ENCODE measurements at regions of chr13 and their contacts with region 1.

Region 1: DNA sequence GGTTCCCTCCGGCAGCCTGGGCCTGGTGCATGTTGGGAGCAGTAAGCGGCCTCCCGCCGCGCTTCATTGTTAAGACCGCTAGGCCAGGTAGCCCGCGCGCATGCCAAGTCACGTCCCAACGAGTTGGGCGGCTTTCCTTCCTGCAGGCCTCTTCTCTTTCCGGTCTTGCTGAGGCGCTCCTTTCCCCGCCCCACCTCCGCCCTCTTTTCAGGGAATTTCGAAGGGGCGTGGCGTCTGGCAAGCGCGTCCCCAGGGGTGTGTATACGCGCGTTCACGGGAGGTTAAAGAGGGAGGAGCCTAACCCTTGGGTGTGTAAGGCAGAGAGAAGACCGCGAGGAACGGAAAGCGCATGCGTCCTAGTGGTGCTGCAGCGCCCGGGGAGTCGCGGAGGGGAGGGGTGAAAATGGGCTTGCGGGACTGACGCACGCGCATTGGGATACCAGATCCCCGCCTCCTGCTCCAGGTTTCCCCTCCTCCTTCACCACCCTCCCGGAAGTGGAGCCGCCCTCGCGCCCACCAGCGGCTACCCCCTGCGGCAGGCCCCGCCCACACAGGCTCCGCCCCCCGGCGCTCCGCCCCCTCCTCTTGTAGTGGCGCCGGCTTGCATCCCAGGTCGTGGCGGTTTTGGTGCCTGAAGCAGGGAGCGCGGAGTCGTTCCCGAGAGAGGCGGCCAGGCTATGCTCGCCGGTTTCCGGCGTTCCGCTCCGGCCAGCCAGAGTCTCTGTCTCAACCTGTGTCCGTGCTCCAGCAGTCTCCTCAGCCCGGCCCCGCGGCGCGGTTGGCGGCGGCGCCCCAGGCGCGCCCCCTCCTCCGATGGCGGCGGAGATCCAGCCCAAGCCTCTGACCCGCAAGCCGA is at the start of gene WDFY2:
- DNase-seq: peak; percentile 100
- ATAC-seq: peak; percentile 80
- H3K4me3 Mint-ChIP-seq: peak within 1 kb of the TSS; percentile 94
- H3K27ac Mint-ChIP-seq: peak within 1 kb of the TSS; percentile 97
- H3K4me1 Mint-ChIP-seq: peaks cover 31% of the 10 kb centered on the region
- H3K27me3 Mint-ChIP-seq: no peaks in the 10 kb centered on the region
- CTCF ChIP-seq: no peak
- total RNA-seq, gene WDFY2: 16.8 and 20.8 TPM in 2 replicates

Region 2: GRCh38 chr13:49792550-49793324 is 1791.4 kb before region 1 on chr13 and contains the start of gene KPNA3:
- CTCF ChIA-PET with region 1: no interaction called
- POLR2A ChIA-PET with region 1: no interaction called
- intact Hi-C with region 1: loop called (anchors 2 kb)
- DNase-seq: peak; percentile 88
- ATAC-seq: peak; percentile 89
- H3K4me3 Mint-ChIP-seq: peak within 1 kb of the TSS; percentile 97
- H3K27ac Mint-ChIP-seq: peak within 1 kb of the TSS; percentile 97
- H3K4me1 Mint-ChIP-seq: peaks cover 31% of the 10 kb centered on the region
- H3K27me3 Mint-ChIP-seq: no peaks in the 10 kb centered on the region
- CTCF ChIP-seq: no peak
- total RNA-seq, gene KPNA3: 28.6 and 28.7 TPM in 2 replicates

Region 3: DNA sequence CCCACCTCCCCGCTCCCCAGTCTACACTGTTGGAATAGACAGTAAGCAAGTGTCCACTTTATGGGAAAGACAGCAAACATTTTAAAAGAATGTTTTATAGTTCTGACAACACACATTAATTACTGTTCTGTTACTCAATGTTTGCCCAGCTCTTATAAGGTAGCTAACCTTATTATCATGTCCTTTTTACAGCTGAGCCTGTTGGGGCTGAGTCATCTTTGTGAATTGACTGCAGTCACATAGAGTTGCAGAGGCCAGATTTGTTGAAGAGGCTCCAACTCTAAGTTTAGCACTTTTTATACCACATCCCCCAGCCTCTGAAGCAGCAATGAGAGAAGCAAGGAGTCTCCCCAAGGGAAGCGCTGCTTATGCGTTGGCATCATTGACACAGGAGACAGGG is 549.2 kb before region 1 on chr13:
- CTCF ChIA-PET with region 1: no interaction called
- POLR2A ChIA-PET with region 1: no interaction called
- intact Hi-C with region 1: no loop called
- DNase-seq: no peak
- ATAC-seq: no peak
- H3K4me3 Mint-ChIP-seq: no peak overlapping the region
- H3K27ac Mint-ChIP-seq: no peak overlapping the region
- H3K4me1 Mint-ChIP-seq: no peaks in the 10 kb centered on the region
- H3K27me3 Mint-ChIP-seq: no peaks in the 10 kb centered on the region
- CTCF ChIP-seq: no peak

Region 4: GRCh38 chr13:51202477-51203046 is 381.5 kb before region 1 on chr13:
- CTCF ChIA-PET with region 1: no interaction called
- POLR2A ChIA-PET with region 1: no interaction called
- intact Hi-C with region 1: no loop called
- DNase-seq: no peak
- ATAC-seq: no peak
- H3K4me3 Mint-ChIP-seq: no peak overlapping the region
- H3K27ac Mint-ChIP-seq: no peak overlapping the region
- H3K4me1 Mint-ChIP-seq: no peaks in the 10 kb centered on the region
- H3K27me3 Mint-ChIP-seq: peaks cover 15% of the 10 kb centered on the region
- CTCF ChIP-seq: no peak

Region 5: GRCh38 chr13:51614350-51614786 is 30.3 kb after region 1 on chr13:
- CTCF ChIA-PET with region 1: interaction called, 5 read pairs
- POLR2A ChIA-PET with region 1: interaction called, 33 read pairs
- intact Hi-C with region 1: loop called (anchors 1 kb)
- DNase-seq: no peak
- ATAC-seq: peak; percentile 86
- H3K4me3 Mint-ChIP-seq: peak overlapping the region; percentile 90
- H3K27ac Mint-ChIP-seq: peak overlapping the region; percentile 97
- H3K4me1 Mint-ChIP-seq: peaks cover 58% of the 10 kb centered on the region
- H3K27me3 Mint-ChIP-seq: no peaks in the 10 kb centered on the region
- CTCF ChIP-seq: no peak

Region 6: GRCh38 chr13:51797664-51798488 is 213.8 kb after region 1 on chr13:
- CTCF ChIA-PET with region 1: interaction called, 5 read pairs
- POLR2A ChIA-PET with region 1: interaction called, 6 read pairs
- intact Hi-C with region 1: loop called (anchors 1 kb)
- DNase-seq: no peak
- ATAC-seq: peak; percentile 45
- H3K4me3 Mint-ChIP-seq: no peak overlapping the region
- H3K27ac Mint-ChIP-seq: no peak overlapping the region
- H3K4me1 Mint-ChIP-seq: peaks cover 47% of the 10 kb centered on the region
- H3K27me3 Mint-ChIP-seq: no peaks in the 10 kb centered on the region
- CTCF ChIP-seq: no peak

Region 7: DNA sequence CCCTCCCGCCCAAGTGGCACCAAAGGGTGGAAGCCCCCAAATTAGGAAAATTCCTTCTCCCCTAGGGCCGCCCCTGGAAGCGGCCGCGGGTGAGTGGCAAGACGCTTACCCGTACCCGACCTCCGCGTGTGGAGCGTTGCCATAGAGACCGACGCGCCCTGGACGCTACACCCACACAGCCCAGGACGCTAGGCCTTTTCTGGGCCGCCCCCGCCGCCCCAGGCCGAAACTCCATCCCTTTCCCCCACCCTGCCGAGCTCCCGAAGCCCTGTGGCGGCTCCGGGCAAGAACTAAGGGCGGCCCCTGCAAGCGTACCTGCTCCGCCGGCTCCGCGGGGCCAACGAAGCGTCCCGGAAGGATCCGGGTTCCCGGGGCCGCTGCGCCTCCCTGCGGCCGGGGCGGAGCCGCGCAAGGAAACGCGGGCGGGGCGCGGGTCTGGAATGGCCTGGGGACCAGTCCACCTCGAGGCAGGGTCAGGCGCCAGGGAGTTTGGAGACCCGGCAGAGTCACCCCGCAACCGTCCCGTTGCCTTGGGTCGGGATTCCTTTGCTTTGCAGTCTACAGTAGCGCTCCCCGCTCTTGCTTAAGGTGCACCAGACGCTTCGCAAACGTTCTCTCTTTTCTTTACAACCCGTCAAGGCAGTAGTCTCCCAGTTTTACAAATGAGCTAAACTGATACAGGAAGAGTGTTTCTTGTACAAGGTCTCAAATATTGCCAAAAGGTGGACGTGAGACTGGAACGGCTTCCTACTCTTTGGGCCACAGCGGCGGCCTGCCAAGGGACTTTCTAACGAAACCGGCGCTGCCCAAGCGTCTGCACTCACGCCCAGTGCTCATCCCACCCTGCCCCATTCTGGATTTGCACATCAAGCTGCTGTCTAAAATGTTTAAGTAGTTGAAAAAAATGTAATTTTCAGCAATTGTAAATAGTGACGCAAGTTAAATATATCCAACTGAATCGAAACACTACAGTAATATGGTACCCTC is 544.9 kb after region 1 on chr13 and contains the start of gene NEK5:
- CTCF ChIA-PET with region 1: no interaction called
- POLR2A ChIA-PET with region 1: no interaction called
- intact Hi-C with region 1: loop called (anchors 5 kb)
- DNase-seq: peak; percentile 56
- ATAC-seq: peak; percentile 68
- H3K4me3 Mint-ChIP-seq: peak within 1 kb of the TSS; percentile 87
- H3K27ac Mint-ChIP-seq: no peak within 1 kb of the TSS
- H3K4me1 Mint-ChIP-seq: peaks cover 17% of the 10 kb centered on the region
- H3K27me3 Mint-ChIP-seq: peaks cover 14% of the 10 kb centered on the region
- CTCF ChIP-seq: no peak
- total RNA-seq, gene NEK5: not detected in 2 replicates

Region 8: GRCh38 chr13:52450012-52450792 is 866.1 kb after region 1 on chr13 and contains the start of gene VPS36:
- CTCF ChIA-PET with region 1: no interaction called
- POLR2A ChIA-PET with region 1: no interaction called
- intact Hi-C with region 1: loop called (anchors 1 kb)
- DNase-seq: peak; percentile 97
- ATAC-seq: peak; percentile 67
- H3K4me3 Mint-ChIP-seq: peak within 1 kb of the TSS; percentile 97
- H3K27ac Mint-ChIP-seq: peak within 1 kb of the TSS; percentile 93
- H3K4me1 Mint-ChIP-seq: peaks cover 39% of the 10 kb centered on the region
- H3K27me3 Mint-ChIP-seq: no peaks in the 10 kb centered on the region
- CTCF ChIP-seq: peak; percentile 95
- total RNA-seq, gene VPS36: 51.8 and 60.6 TPM in 2 replicates

Measured in activated B cell treated with CpG ODN at 0.5 μM for 24 hours (primary cell).